ENCODE measurements at regions of chr10 and their contacts with region 1.

Region 1: GRCh38 chr10:71835671-71836595 is 15.1 kb downstream of the PSAP start:
- DNase-seq: peak; percentile 95
- ATAC-seq: peak; percentile 92
- H3K4me3 ChIP-seq: peak overlapping the region; percentile 7 to 49 (median 30)
- H3K4me3 Mint-ChIP-seq: peak overlapping the region; percentile 88
- H3K27ac ChIP-seq: peak overlapping the region; percentile 91 to 94
- H3K27ac Mint-ChIP-seq: peak overlapping the region; percentile 97
- H3K4me1 ChIP-seq: peaks cover 74 to 91% of the 10 kb centered on the region in 2 donors
- H3K4me1 Mint-ChIP-seq: peaks cover 79% of the 10 kb centered on the region
- H3K27me3 ChIP-seq: no peaks in the 10 kb centered on the region
- H3K27me3 Mint-ChIP-seq: no peaks in the 10 kb centered on the region
- CTCF ChIP-seq: no peak

Region 2: DNA sequence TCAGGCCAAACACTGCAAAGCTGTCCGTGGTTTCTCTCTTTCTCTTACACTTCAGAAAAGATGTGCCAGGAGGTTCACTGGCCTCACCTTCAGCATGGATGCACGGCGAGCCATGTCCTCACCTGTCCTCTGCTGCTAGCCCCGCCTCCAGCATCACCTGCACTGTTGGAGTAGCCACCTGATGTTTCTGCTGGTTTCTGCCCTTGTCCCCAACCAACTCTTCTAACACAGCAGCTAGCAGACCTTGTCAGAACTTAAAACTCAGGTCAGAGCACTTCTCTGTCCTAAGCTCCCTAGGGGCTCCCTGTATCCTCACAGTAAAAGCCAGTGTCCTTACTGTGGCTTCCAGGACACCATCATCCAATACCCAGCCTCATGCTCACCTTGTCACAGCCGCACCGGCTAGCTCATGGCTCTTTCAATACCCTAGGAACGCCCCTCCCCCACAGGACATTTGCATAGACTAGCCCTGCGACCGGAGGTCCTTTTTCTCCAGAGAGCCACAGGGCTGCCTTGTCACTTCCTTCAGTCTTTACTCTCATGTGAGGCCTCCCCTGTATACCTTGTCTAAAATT is 1342.2 kb before region 1 on chr10:
- CTCF ChIA-PET with region 1: no interaction called
- POLR2A ChIA-PET with region 1: no interaction called
- intact Hi-C with region 1: loop called (anchors 10 kb)
- DNase-seq: peak; percentile 78
- ATAC-seq: peak; percentile 73
- H3K4me3 ChIP-seq: peak overlapping the region in 3 of 5 experiments; percentile 13 to 57 (median 28)
- H3K4me3 Mint-ChIP-seq: peak overlapping the region; percentile 68
- H3K27ac ChIP-seq: peak overlapping the region; percentile 81 to 88
- H3K27ac Mint-ChIP-seq: peak overlapping the region; percentile 89
- H3K4me1 ChIP-seq: peaks cover 65 to 69% of the 10 kb centered on the region in 2 donors
- H3K4me1 Mint-ChIP-seq: peaks cover 76% of the 10 kb centered on the region
- H3K27me3 ChIP-seq: no peaks in the 10 kb centered on the region
- H3K27me3 Mint-ChIP-seq: no peaks in the 10 kb centered on the region
- CTCF ChIP-seq: no peak

Region 3: GRCh38 chr10:71812016-71812912 is 23.7 kb before region 1 on chr10:
- CTCF ChIA-PET with region 1: interaction called, 20 read pairs
- POLR2A ChIA-PET with region 1: no interaction called
- intact Hi-C with region 1: no loop called
- DNase-seq: peak; percentile 85
- ATAC-seq: peak; percentile 93
- H3K4me3 ChIP-seq: no peak overlapping the region
- H3K4me3 Mint-ChIP-seq: no peak overlapping the region
- H3K27ac ChIP-seq: no peak overlapping the region
- H3K27ac Mint-ChIP-seq: no peak overlapping the region
- H3K4me1 ChIP-seq: peaks cover 5 to 11% of the 10 kb centered on the region in 2 donors
- H3K4me1 Mint-ChIP-seq: peaks cover 6% of the 10 kb centered on the region
- H3K27me3 ChIP-seq: no peaks in the 10 kb centered on the region
- H3K27me3 Mint-ChIP-seq: peaks cover 4% of the 10 kb centered on the region
- CTCF ChIP-seq: peak; percentile 84

Region 4: DNA sequence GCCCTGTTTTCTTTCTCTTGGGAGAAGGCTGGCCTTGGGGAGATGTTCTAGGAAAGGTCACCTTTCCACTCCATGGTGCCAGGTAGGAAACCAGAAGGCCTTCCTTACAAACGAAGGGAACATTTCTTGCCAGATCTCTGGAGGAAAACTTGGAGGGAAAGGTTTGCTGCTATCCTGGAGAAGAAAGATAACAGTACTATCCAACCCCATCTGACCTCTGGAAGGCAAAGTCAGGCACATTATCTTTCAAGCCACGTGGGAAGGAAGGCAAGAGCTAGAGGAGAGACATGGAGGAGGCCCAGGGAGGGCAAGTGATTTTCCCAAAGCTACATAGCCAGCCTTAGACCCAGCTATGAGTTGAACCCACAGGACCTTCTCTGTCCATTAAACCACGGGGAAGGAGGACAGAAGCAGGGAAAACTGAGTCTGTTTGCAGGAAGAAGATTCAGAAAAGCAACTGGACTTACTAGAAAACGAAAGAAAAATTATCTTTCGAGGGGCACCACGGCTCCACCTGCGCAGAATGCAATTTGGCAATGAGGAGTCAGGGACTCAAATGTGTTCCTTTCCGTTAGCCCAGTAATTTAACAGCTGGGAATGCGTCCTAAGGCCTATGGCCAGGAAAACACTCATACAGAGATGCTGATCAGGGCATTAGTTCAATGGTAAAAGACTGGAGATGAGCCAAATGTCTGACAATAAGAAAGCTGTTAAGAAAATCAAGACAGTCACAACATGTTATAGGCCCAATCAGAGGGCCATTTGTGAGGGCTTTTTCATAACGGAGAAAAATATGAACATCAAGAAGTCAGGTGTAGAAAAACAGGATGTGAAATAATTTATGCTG is 47.1 kb after region 1 on chr10:
- CTCF ChIA-PET with region 1: interaction called, 12 read pairs
- POLR2A ChIA-PET with region 1: interaction called, 8 read pairs
- intact Hi-C with region 1: loop called (anchors 1 kb)
- DNase-seq: peak; percentile 37
- ATAC-seq: no peak
- H3K4me3 ChIP-seq: peak overlapping the region in 1 of 5 experiments; percentile 8
- H3K4me3 Mint-ChIP-seq: peak overlapping the region; percentile 69
- H3K27ac ChIP-seq: no peak overlapping the region
- H3K27ac Mint-ChIP-seq: peak overlapping the region; percentile 85
- H3K4me1 ChIP-seq: peaks cover 29 to 42% of the 10 kb centered on the region in 2 donors
- H3K4me1 Mint-ChIP-seq: peaks cover 44% of the 10 kb centered on the region
- H3K27me3 ChIP-seq: no peaks in the 10 kb centered on the region
- H3K27me3 Mint-ChIP-seq: no peaks in the 10 kb centered on the region
- CTCF ChIP-seq: no peak

Region 5: GRCh38 chr10:72215652-72216549 is 380.0 kb after region 1 on chr10 and contains the starts of genes ANAPC16 and ASCC1:
- CTCF ChIA-PET with region 1: no interaction called
- POLR2A ChIA-PET with region 1: no interaction called
- intact Hi-C with region 1: loop called (anchors 5 kb)
- DNase-seq: peak; percentile 97
- ATAC-seq: peak; percentile 78
- H3K4me3 ChIP-seq: peak within 1 kb of the TSS; percentile 79 to 92 (median 83)
- H3K4me3 Mint-ChIP-seq: peak within 1 kb of the TSS; percentile 99
- H3K27ac ChIP-seq: peak within 1 kb of the TSS; percentile 92
- H3K27ac Mint-ChIP-seq: peak within 1 kb of the TSS; percentile 100
- H3K4me1 ChIP-seq: peaks cover 42 to 54% of the 10 kb centered on the region in 2 donors
- H3K4me1 Mint-ChIP-seq: peaks cover 54% of the 10 kb centered on the region
- H3K27me3 ChIP-seq: no peaks in the 10 kb centered on the region
- H3K27me3 Mint-ChIP-seq: no peaks in the 10 kb centered on the region
- CTCF ChIP-seq: no peak
- total RNA-seq, gene ANAPC16: 128 and 132 TPM in 2 replicates
- total RNA-seq, gene ASCC1: 28.1 and 31.3 TPM in 2 replicates

Region 6: DNA sequence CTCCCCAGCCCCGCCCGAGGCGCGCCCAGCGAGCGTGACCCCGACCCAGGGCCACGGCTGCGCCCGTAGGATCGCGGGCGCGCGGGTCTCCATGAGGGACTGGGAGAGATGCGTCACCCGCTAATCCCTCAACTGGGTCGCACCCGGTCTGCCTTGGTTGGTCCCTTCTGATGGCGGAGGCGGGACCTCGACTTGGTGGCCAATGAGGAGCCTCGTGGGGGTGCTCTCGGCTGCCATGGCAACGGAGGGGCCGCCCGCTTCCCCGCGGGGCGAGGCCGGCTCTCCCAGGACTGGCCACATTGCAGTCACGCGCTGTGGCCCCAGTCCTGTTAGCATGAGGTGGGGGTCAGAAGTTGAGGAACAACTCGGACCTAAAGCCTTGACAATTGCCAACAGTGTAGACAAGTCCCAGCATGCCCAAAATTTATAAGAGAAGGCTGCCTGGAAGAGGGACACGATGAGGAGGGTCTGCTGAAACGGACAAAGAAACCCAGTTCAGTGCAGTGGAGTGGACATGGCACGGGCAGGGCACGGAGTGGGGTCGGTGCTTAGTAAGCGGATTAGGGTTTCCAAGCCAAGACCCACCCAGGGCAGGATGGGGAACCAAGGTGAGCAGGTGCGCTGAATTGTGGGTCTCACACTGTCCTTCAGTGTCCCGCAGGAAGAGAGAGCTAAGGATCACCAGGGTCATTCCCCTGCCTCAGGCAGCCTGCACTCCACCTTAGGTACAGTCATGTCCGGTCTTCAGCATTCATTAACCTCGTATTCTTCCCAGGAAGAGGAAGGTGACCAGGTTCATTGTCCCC is 462.2 kb after region 1 on chr10:
- CTCF ChIA-PET with region 1: no interaction called
- POLR2A ChIA-PET with region 1: no interaction called
- intact Hi-C with region 1: loop called (anchors 2 kb)
- DNase-seq: peak; percentile 96
- ATAC-seq: peak; percentile 71
- H3K4me3 ChIP-seq: peak overlapping the region in 4 of 5 experiments; percentile 74 to 90 (median 86)
- H3K4me3 Mint-ChIP-seq: peak overlapping the region; percentile 92
- H3K27ac ChIP-seq: peak overlapping the region; percentile 99 to 100
- H3K27ac Mint-ChIP-seq: peak overlapping the region; percentile 99
- H3K4me1 ChIP-seq: peaks cover 27 to 38% of the 10 kb centered on the region in 2 donors
- H3K4me1 Mint-ChIP-seq: peaks cover 56% of the 10 kb centered on the region
- H3K27me3 ChIP-seq: no peaks in the 10 kb centered on the region
- H3K27me3 Mint-ChIP-seq: no peaks in the 10 kb centered on the region
- CTCF ChIP-seq: no peak

Region 7: GRCh38 chr10:72426986-72427385 is 591.1 kb after region 1 on chr10:
- CTCF ChIA-PET with region 1: no interaction called
- POLR2A ChIA-PET with region 1: no interaction called
- intact Hi-C with region 1: no loop called
- DNase-seq: no peak
- ATAC-seq: no peak
- H3K4me3 ChIP-seq: no peak overlapping the region
- H3K4me3 Mint-ChIP-seq: no peak overlapping the region
- H3K27ac ChIP-seq: no peak overlapping the region
- H3K27ac Mint-ChIP-seq: no peak overlapping the region
- H3K4me1 ChIP-seq: no peaks in the 10 kb centered on the region
- H3K4me1 Mint-ChIP-seq: no peaks in the 10 kb centered on the region
- H3K27me3 ChIP-seq: no peaks in the 10 kb centered on the region
- H3K27me3 Mint-ChIP-seq: no peaks in the 10 kb centered on the region
- CTCF ChIP-seq: no peak

Measured in B cell (primary cell).